ENCODE measurements at regions of chr15 and their contacts with region 1.

Region 1: DNA sequence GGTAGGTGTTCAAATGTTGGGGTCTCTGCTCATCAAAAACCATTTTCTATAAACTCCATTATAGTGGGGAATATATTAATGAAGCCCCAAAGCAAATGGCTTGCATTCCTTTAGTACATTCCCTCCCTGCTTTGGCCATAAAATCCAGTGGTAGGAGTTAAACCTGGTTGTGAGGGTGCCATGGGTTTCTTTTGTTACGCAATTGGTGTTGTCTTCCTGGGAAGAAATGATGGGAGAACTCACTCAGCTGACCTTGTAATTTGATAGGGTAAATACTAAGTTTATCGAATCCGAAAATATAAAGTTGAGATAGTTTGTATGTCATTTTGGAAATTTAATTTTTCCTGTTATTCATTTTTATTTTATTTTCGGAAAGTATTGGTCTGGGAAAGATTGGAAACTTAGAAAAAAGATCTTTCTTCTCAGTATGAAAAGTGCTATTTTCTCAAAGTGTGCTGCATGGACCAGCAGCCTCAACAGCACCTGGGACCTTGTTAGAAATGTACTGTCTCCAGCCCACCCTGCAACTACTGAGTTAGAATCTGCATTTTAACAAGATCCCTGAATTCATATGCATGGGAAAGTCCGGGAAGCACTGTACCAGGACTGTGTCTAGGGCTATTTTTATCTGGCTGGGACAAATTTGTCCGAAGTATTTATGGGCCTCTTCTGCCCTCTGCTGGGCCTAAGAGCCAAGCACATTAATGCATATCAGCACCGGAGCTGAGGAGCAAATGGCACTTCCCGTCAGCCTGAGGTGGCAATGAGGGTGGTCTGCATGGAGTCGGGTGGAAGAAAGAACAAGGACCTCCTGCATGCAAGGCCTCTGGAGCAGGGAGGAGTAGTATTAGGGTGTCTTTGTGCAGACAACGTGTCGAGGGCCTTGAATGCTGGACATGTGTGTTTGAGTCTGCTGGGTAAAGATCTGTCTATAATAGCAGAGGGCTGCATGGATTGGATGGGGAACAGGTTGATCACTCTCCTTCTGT is 54.7 kb downstream of the FAM81A start:
- DNase-seq: peak; percentile 67
- H3K4me3 ChIP-seq: no peak overlapping the region
- H3K27ac ChIP-seq: no peak overlapping the region
- H3K4me1 ChIP-seq: no peaks in the 10 kb centered on the region
- H3K27me3 ChIP-seq: no peaks in the 10 kb centered on the region
- CTCF ChIP-seq: peak; percentile 61 to 86 (median 80)
- POLR2A ChIP-seq: no peak

Region 2: DNA sequence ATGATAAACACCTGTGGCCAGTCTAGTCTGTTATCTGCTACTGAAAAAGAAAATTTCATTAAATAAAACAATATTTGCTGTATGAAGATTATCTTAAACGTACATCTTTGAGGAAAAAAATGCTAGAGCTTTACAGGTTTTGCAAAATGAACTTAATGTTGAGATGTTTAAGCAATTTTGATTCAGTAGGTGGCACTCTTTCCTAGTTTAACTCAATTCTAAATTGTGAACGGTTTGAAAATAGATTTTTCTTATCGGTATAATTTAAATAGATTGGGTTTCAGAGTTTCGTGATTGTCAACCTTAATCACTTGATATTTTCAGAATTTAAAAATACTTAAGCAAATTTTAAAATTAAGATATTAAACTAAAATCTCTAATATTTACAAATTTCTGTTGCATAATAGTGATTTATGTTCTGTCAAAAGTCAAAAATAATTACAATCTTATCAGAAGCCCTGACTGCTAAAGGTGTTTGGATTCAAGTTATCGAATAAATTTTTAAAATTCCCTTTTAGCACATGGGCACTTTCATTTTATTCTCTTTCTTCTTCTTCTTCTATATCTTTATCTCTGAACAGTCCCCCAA is 512.2 kb before region 1 on chr15:
- intact Hi-C with region 1: loop called (anchors 2 kb)
- DNase-seq: no peak
- H3K4me3 ChIP-seq: no peak overlapping the region
- H3K27ac ChIP-seq: no peak overlapping the region
- H3K4me1 ChIP-seq: no peaks in the 10 kb centered on the region
- H3K27me3 ChIP-seq: no peaks in the 10 kb centered on the region
- CTCF ChIP-seq: peak in 3 of 4 experiments; percentile 39 to 69 (median 57)
- POLR2A ChIP-seq: no peak

Region 3: DNA sequence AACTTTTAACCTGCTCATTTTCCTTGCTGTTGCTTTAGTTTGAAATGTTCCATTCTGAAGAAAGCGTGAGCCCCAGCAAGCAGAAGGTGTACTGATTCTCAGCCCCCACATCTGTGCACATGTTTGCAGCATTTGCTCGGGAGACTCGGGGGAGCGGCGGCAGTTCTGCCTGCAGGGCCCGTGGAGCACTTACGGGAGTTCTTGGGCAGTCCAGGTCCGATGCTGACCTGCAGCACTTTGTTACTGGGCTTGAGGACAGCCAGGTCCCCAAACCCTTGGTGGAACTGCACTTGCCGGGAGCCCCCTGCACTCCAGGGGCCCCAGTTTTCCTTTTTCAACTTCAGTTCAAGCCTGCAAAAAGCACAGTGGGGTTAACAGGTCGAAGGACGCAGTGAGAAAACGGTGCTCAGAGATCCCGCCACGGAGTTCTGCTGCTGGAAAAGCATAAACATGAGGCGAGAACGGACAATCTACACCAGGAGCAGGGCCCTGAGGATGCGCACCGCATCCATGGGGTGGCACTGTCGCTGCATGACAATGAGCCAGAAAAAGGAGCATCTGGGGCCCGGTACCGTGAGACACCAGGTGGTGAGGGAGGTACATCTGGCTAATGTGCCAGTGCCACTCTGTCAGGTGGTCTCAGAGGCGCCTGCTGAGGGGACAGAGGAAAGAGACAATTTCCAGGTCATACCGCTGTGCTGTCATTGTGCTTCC is 331.6 kb before region 1 on chr15:
- intact Hi-C with region 1: loop called (anchors 5 kb)
- DNase-seq: no peak
- H3K4me3 ChIP-seq: no peak overlapping the region
- H3K27ac ChIP-seq: no peak overlapping the region
- H3K4me1 ChIP-seq: peaks cover 17% of the 10 kb centered on the region
- H3K27me3 ChIP-seq: no peaks in the 10 kb centered on the region
- CTCF ChIP-seq: peak in 3 of 4 experiments; percentile 31 to 61 (median 53)
- POLR2A ChIP-seq: no peak

Region 4: GRCh38 chr15:59247364-59247763 is 245.3 kb before region 1 on chr15:
- intact Hi-C with region 1: loop called (anchors 5 kb)
- DNase-seq: peak; percentile 43
- H3K4me3 ChIP-seq: no peak overlapping the region
- H3K27ac ChIP-seq: no peak overlapping the region
- H3K4me1 ChIP-seq: no peaks in the 10 kb centered on the region
- H3K27me3 ChIP-seq: no peaks in the 10 kb centered on the region
- CTCF ChIP-seq: peak in 3 of 4 experiments; percentile 41 to 65 (median 49)
- POLR2A ChIP-seq: no peak